ENCODE measurements at regions of chr2 and their contacts with region 1.

Region 1: GRCh38 chr2:113248997-113249770 is 29.5 kb downstream of the PAX8 start:
- DNase-seq: peak; percentile 51 to 88 (median 74)
- ATAC-seq: peak; percentile 62
- H3K4me3 ChIP-seq: no peak overlapping the region
- H3K4me3 Mint-ChIP-seq: no peak overlapping the region
- H3K27ac ChIP-seq: peak overlapping the region in 1 of 2 experiments; percentile 25
- H3K27ac Mint-ChIP-seq: peak overlapping the region; percentile 12
- H3K4me1 ChIP-seq: peaks cover 47% of the 10 kb centered on the region
- H3K4me1 Mint-ChIP-seq: peaks cover 50% of the 10 kb centered on the region
- H3K27me3 ChIP-seq: no peaks in the 10 kb centered on the region
- H3K27me3 Mint-ChIP-seq: no peaks in the 10 kb centered on the region
- CTCF ChIP-seq: peak; percentile 94

Region 2: DNA sequence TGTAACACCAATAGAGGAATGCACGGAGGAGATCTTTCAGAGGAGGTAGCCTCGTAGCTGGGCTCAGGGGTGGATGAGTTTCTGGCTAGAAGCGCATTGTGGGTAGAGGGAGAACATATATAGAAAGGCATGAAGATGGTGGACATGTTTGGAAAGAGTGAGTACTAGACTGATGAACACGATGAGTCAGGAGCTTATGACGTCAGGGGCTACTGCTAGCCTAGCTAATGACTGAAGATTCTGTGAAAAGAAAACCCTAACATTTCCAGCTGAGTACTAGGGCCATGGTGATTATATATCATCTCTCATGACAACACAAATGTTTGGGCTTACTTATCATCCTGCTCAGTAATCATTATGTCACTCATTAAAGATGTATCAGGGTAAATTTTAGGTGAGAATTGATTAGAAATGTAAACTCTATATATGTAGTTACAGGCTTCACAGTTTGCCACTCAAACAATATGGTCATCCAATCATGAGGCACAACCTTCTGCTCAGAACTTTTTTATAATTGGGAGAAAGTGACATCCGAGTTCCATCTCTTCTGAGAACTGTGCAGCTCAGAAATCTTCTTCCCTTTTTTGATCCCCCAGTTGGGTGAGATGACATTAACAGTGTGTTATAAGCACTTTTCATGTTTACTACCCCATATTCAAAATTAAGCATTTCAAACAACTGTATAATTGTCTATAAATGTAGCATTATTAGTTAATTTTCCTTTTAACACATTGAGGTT is 144.0 kb before region 1 on chr2:
- CTCF ChIA-PET with region 1: no interaction called
- POLR2A ChIA-PET with region 1: no interaction called
- intact Hi-C with region 1: no loop called
- DNase-seq: no peak
- ATAC-seq: no peak
- H3K4me3 ChIP-seq: no peak overlapping the region
- H3K4me3 Mint-ChIP-seq: no peak overlapping the region
- H3K27ac ChIP-seq: no peak overlapping the region
- H3K27ac Mint-ChIP-seq: no peak overlapping the region
- H3K4me1 ChIP-seq: no peaks in the 10 kb centered on the region
- H3K4me1 Mint-ChIP-seq: no peaks in the 10 kb centered on the region
- H3K27me3 ChIP-seq: no peaks in the 10 kb centered on the region
- H3K27me3 Mint-ChIP-seq: peaks cover 3% of the 10 kb centered on the region
- CTCF ChIP-seq: no peak

Region 3: GRCh38 chr2:113233593-113234550 is 15.3 kb before region 1 on chr2:
- CTCF ChIA-PET with region 1: interaction called, 18 read pairs
- POLR2A ChIA-PET with region 1: no interaction called
- intact Hi-C with region 1: no loop called
- DNase-seq: no peak
- ATAC-seq: no peak
- H3K4me3 ChIP-seq: no peak overlapping the region
- H3K4me3 Mint-ChIP-seq: no peak overlapping the region
- H3K27ac ChIP-seq: no peak overlapping the region
- H3K27ac Mint-ChIP-seq: no peak overlapping the region
- H3K4me1 ChIP-seq: no peaks in the 10 kb centered on the region
- H3K4me1 Mint-ChIP-seq: peaks cover 4% of the 10 kb centered on the region
- H3K27me3 ChIP-seq: no peaks in the 10 kb centered on the region
- H3K27me3 Mint-ChIP-seq: no peaks in the 10 kb centered on the region
- CTCF ChIP-seq: no peak

Region 4: GRCh38 chr2:113273027-113273551 is 23.9 kb after region 1 on chr2:
- CTCF ChIA-PET with region 1: interaction called, 7 read pairs
- POLR2A ChIA-PET with region 1: interaction called, 3 read pairs
- intact Hi-C with region 1: loop called in 1 of 2 experiments (anchors 2 kb)
- DNase-seq: peak in 4 of 9 experiments; percentile 17 to 63 (median 42)
- ATAC-seq: peak; percentile 97
- H3K4me3 ChIP-seq: no peak overlapping the region
- H3K4me3 Mint-ChIP-seq: peak overlapping the region; percentile 49
- H3K27ac ChIP-seq: no peak overlapping the region
- H3K27ac Mint-ChIP-seq: no peak overlapping the region
- H3K4me1 ChIP-seq: peaks cover 39% of the 10 kb centered on the region
- H3K4me1 Mint-ChIP-seq: peaks cover 30% of the 10 kb centered on the region
- H3K27me3 ChIP-seq: peaks cover 23 to 34% of the 10 kb centered on the region in 2 experiments
- H3K27me3 Mint-ChIP-seq: peaks cover 53% of the 10 kb centered on the region
- CTCF ChIP-seq: peak; percentile 13

Region 5: DNA sequence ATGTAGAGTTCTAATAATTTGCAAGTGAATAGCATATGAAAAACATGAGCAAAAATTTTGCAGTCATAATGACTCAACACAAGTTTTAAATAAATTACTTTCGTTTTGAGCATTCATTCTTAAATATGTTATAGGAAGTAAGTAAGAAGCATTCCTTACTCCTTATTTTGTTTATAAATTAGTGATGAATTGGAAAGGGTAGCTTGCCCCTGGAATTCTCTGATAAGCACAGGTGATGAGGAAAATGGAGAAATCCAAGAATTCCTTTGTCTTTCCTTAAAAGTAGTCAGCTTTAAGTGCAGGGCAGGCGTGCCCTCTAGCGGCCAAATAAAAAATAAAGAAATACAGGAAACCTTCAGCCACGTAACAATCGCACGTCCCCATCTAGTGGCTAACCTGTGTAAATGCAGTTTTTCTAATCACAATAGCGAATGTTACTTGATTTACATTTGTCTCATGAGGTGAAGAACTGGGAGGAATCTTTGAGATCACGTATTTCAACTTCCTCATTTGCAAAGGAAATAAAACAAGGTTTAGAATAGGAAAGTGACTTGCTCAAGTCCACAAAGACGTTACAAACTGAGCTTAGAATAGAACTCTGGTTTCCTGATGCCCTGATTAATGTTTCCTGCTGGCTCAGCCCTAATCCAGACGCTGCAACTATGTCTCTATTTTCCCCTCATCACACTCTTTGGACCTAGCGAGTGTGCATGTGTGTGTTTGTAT is 141.1 kb after region 1 on chr2:
- CTCF ChIA-PET with region 1: interaction called, 24 read pairs
- POLR2A ChIA-PET with region 1: no interaction called
- intact Hi-C with region 1: loop called in 1 of 2 experiments (anchors 5 kb)
- DNase-seq: peak; percentile 23 to 88 (median 59)
- ATAC-seq: peak; percentile 99
- H3K4me3 ChIP-seq: peak overlapping the region; percentile 39 to 47
- H3K4me3 Mint-ChIP-seq: peak overlapping the region; percentile 78
- H3K27ac ChIP-seq: no peak overlapping the region
- H3K27ac Mint-ChIP-seq: peak overlapping the region; percentile 63
- H3K4me1 ChIP-seq: no peaks in the 10 kb centered on the region
- H3K4me1 Mint-ChIP-seq: peaks cover 13% of the 10 kb centered on the region
- H3K27me3 ChIP-seq: no peaks in the 10 kb centered on the region
- H3K27me3 Mint-ChIP-seq: peaks cover 5% of the 10 kb centered on the region
- CTCF ChIP-seq: peak; percentile 86